ENCODE measurements at regions of chr3 and their contacts with region 1.

Region 1: DNA sequence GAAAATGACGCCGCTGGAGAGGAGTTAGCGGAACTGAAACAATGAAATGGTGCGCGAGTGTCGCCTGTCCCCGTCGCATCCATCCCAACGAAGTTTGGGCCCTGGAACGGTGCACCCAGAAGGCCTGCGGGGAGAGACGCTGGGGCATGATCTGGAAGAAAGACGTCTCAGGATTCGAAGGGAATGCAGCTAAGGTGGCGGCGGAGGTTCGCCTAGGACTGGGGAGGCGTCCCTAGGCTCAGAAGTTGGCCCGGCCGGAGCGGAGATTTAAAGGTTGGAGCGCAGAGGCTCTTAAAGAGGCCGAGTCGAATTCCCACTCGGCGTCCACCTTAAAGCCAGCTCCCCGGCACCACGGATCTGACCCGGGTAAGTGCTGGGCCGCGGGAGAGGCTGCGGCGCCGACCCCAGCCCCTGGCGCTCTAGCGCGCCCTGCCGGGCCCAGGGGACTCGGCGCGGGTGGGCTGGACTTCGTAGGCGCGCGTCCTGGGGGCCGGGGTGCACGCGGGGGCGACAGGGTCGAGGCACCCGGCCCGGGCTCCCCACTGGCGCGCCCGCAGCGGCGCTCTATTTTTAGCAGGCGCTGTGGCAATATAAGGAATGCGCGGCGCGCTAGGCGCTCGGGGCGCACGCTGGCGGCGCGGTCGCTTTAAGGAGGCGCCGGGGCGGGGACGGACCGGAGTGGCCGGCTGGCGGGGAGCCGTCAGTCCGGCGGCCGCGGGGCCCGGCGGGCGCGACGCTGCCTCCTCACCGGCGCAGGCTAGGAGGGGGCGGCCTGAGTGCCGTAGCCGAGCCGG is at the start of gene MRAS:
- DNase-seq: peak; percentile 85 to 94 (median 93)
- ATAC-seq: peak; percentile 81 to 84
- H3K4me3 ChIP-seq: peak within 1 kb of the TSS; percentile 96
- H3K27ac ChIP-seq: peak within 1 kb of the TSS; percentile 89
- H3K4me1 ChIP-seq: peaks cover 10% of the 10 kb centered on the region
- H3K27me3 ChIP-seq: no peaks in the 10 kb centered on the region
- total RNA-seq, gene MRAS: 244 to 374 (median 303) TPM

Region 2: GRCh38 chr3:138068579-138069174 is 279.5 kb before region 1 on chr3:
- intact Hi-C with region 1: no loop called
- DNase-seq: peak; percentile 84 to 89 (median 88)
- ATAC-seq: peak; percentile 90 to 92
- H3K4me3 ChIP-seq: no peak overlapping the region
- H3K27ac ChIP-seq: no peak overlapping the region
- H3K4me1 ChIP-seq: no peaks in the 10 kb centered on the region
- H3K27me3 ChIP-seq: no peaks in the 10 kb centered on the region

Region 3: GRCh38 chr3:138202945-138203701 is 145.0 kb before region 1 on chr3:
- intact Hi-C with region 1: no loop called
- DNase-seq: no peak
- ATAC-seq: no peak
- H3K4me3 ChIP-seq: no peak overlapping the region
- H3K27ac ChIP-seq: no peak overlapping the region
- H3K4me1 ChIP-seq: peaks cover 6% of the 10 kb centered on the region
- H3K27me3 ChIP-seq: no peaks in the 10 kb centered on the region

Region 4: DNA sequence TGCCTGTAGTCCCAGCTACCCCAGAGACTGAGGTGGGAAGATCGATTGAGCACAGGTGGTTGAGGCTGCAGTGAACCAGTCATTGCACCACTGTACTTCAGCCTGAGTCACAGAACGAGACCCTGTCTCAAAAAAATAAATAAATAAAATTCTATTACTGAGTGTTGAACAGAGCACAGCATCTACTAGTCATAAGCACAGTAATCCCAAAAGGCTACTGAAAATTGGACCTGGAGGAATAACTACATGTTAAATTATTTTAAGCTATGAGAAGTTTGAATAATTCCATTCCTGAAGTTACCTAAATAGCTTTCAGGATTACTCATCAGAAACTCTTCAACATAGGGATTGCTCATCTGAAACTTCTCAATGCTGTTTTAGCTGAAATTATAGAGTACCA is 117.6 kb before region 1 on chr3:
- intact Hi-C with region 1: no loop called
- DNase-seq: no peak
- ATAC-seq: no peak
- H3K4me3 ChIP-seq: no peak overlapping the region
- H3K27ac ChIP-seq: no peak overlapping the region
- H3K4me1 ChIP-seq: no peaks in the 10 kb centered on the region
- H3K27me3 ChIP-seq: no peaks in the 10 kb centered on the region

Region 5: GRCh38 chr3:138381950-138382688 is 34.0 kb after region 1 on chr3:
- intact Hi-C with region 1: loop called in 2 of 4 experiments (anchors 5 kb)
- DNase-seq: peak; percentile 85 to 91 (median 88)
- ATAC-seq: peak; percentile 91 to 94
- H3K4me3 ChIP-seq: no peak overlapping the region
- H3K27ac ChIP-seq: peak overlapping the region; percentile 98
- H3K4me1 ChIP-seq: peaks cover 21% of the 10 kb centered on the region
- H3K27me3 ChIP-seq: no peaks in the 10 kb centered on the region

Region 6: DNA sequence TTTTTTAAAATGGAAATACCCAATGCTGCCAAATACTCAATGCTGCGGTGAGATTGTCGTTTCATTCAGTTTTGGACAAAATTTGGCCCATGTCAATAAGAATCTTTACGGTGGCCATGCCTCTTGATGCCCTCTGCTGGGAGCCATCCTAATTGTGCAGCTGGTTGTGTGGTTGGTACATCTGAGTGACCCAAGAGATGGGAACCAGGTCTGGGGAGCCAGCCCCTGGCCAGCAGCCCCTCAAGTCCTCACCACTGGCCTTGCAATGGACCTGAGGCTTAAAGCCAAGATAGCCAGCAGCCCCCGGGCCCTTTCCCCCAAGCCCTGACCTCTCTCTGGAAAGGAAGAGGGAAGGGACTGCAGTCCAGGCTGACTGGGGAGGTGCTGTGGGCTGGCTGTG is 49.8 kb after region 1 on chr3:
- intact Hi-C with region 1: no loop called
- DNase-seq: no peak
- ATAC-seq: no peak
- H3K4me3 ChIP-seq: no peak overlapping the region
- H3K27ac ChIP-seq: peak overlapping the region; percentile 8
- H3K4me1 ChIP-seq: peaks cover 20% of the 10 kb centered on the region
- H3K27me3 ChIP-seq: no peaks in the 10 kb centered on the region

Measured in right cardiac atrium (tissue), 5 donors.